ENCODE measurements at regions of chr2 and their contacts with region 1.

Region 1: GRCh38 chr2:237020090-237020489 is 65.6 kb upstream of the COPS8 start:
- DNase-seq: no peak
- ATAC-seq: no peak
- H3K4me3 ChIP-seq: no peak overlapping the region
- H3K27ac ChIP-seq: no peak overlapping the region
- H3K4me1 ChIP-seq: 0 out of 2 replicates have a peak, but pooled peaks cover 2% of the 10 kb centered on the region
- H3K27me3 ChIP-seq: peaks cover 4% of the 10 kb centered on the region; the same call in 1 of the 2 replicates
- CTCF ChIP-seq: no peak
- POLR2A ChIP-seq: no peak
- RAD21 ChIP-seq: no peak

Region 2: DNA sequence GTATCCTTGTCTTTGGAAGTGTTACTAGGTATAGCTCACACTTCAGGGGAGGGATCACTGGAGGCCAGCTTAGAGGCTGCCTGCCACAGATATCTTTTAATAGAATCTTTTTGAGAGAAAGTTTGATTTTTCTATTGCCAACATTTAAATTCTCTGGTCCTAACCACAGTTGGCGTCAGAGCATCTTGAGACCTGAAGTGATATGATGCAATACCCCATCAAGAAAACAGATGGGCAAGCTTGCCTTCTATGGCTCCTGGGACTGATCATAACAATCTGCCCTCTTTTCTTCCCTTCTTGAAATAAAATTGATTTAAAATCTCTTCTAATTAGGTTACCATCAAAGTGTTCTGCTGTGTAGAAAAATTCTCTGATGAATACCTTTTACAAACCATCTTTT is 556.0 kb before region 1 on chr2:
- CTCF ChIA-PET with region 1: no interaction called
- POLR2A ChIA-PET with region 1: no interaction called
- dilution Hi-C with region 1: no loop called
- in situ Hi-C with region 1: no loop called
- intact Hi-C with region 1: no loop called
- DNase-seq: no peak
- ATAC-seq: no peak
- H3K4me3 ChIP-seq: no peak overlapping the region
- H3K27ac ChIP-seq: no peak overlapping the region
- H3K4me1 ChIP-seq: no peaks in the 10 kb centered on the region
- H3K27me3 ChIP-seq: no peaks in the 10 kb centered on the region
- CTCF ChIP-seq: no peak
- POLR2A ChIP-seq: no peak
- RAD21 ChIP-seq: no peak

Region 3: GRCh38 chr2:236512902-236513435 is 507.1 kb before region 1 on chr2:
- CTCF ChIA-PET with region 1: no interaction called
- POLR2A ChIA-PET with region 1: no interaction called
- dilution Hi-C with region 1: no loop called
- in situ Hi-C with region 1: no loop called
- intact Hi-C with region 1: loop called (anchors 2 kb)
- DNase-seq: peak; percentile 34
- ATAC-seq: peak; percentile 89
- H3K4me3 ChIP-seq: no peak overlapping the region
- H3K27ac ChIP-seq: no peak overlapping the region
- H3K4me1 ChIP-seq: no peaks in the 10 kb centered on the region
- H3K27me3 ChIP-seq: peaks cover 7% of the 10 kb centered on the region
- CTCF ChIP-seq: peak; percentile 55
- POLR2A ChIP-seq: no peak
- RAD21 ChIP-seq: peak; percentile 58

Region 4: DNA sequence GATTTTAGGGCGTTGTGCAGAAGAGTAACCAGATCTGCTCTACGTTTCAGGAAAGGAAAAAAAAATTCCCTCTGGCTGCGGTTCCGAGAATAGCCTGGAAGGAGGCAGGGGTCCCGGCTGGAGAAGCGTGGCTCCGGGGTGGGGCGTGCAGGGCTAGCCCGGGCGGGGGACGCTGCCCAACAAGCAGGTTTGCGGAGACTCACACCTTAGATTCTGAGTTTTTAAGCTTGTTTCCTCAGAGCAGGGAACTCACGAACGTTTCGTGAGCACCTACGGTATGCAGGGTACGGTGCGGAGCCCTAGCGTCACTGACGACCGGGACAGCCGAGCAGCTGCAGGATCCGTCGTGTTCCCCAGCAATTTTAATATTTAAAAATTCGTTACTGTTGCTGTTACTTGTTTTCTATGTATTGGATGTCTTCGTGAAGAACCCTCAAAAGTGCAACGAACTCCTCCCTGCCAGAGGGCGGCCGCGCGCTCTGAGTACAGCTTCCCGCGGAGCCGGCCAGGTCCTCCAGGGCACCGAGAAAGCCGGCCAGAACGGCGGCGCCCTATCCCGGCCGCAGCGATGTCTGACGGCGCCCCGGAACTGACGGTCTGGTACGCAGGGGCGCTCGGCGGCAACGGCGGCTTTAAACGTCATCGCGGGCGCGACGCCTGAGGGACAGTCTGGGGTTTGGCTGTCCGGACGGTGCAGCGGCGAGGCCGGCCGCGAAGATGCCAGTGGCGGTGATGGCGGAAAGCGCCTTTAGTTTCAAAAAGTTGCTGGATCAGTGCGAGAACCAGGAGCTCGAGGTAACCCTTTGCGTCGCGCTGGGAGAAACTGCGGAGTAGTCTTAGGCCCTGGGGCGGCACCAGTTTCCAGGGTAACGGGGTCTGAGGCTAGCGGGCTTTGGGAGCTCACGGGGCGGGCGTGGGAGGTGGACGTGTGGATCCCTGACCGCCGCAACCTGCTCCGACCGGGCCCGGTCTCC is 65.4 kb after region 1 on chr2 and contains the start of gene COPS8:
- CTCF ChIA-PET with region 1: no interaction called
- POLR2A ChIA-PET with region 1: no interaction called
- dilution Hi-C with region 1: no loop called
- in situ Hi-C with region 1: no loop called
- intact Hi-C with region 1: no loop called
- DNase-seq: peak; percentile 91
- ATAC-seq: peak; percentile 99
- H3K4me3 ChIP-seq: peak within 1 kb of the TSS; percentile 66
- H3K27ac ChIP-seq: peak within 1 kb of the TSS; percentile 82
- H3K4me1 ChIP-seq: no peaks in the 10 kb centered on the region; the same call in 1 of the 2 replicates
- H3K27me3 ChIP-seq: no peaks in the 10 kb centered on the region
- CTCF ChIP-seq: peak; percentile 26
- POLR2A ChIP-seq: peak; percentile 96
- RAD21 ChIP-seq: no peak; the same call in 1 of the 2 replicates
- total RNA-seq, gene COPS8: 47.0 and 61.4 TPM in 2 replicates

Region 5: GRCh38 chr2:237682856-237683670 is 663.0 kb after region 1 on chr2:
- CTCF ChIA-PET with region 1: no interaction called
- POLR2A ChIA-PET with region 1: no interaction called
- dilution Hi-C with region 1: no loop called
- in situ Hi-C with region 1: no loop called
- intact Hi-C with region 1: no loop called
- DNase-seq: no peak
- ATAC-seq: no peak
- H3K4me3 ChIP-seq: no peak overlapping the region
- H3K27ac ChIP-seq: no peak overlapping the region
- H3K4me1 ChIP-seq: peaks cover 12% of the 10 kb centered on the region
- H3K27me3 ChIP-seq: no peaks in the 10 kb centered on the region
- CTCF ChIP-seq: no peak
- POLR2A ChIP-seq: no peak
- RAD21 ChIP-seq: no peak